Transverse colon (tissue), 4 donors: ENCODE measurements at regions of chr1 and their contacts with region 1.

Region 1: GRCh38 chr1:71657891-71658679 is 577.2 kb upstream of the ZRANB2 start:
- DNase-seq: no peak
- H3K4me3 ChIP-seq: no peak overlapping the region
- H3K27ac ChIP-seq: no peak overlapping the region
- H3K4me1 ChIP-seq: peaks cover 0 to 6% (median 2%) of the 10 kb centered on the region in 4 donors
- H3K27me3 ChIP-seq: no peaks in the 10 kb centered on the region
- CTCF ChIP-seq: no peak
- EP300 ChIP-seq: no peak
- POLR2A ChIP-seq: no peak

Region 2: GRCh38 chr1:71572038-71572437 is 86.0 kb before region 1 on chr1:
- in situ Hi-C with region 1: no loop called
- intact Hi-C with region 1: no loop called
- DNase-seq: no peak
- H3K4me3 ChIP-seq: no peak overlapping the region
- H3K27ac ChIP-seq: peak overlapping the region in 1 of 4 donors; percentile 12
- H3K4me1 ChIP-seq: peaks cover 0 to 4% (median 0%) of the 10 kb centered on the region in 4 donors
- H3K27me3 ChIP-seq: no peaks in the 10 kb centered on the region
- CTCF ChIP-seq: no peak
- EP300 ChIP-seq: no peak
- POLR2A ChIP-seq: no peak

Region 3: GRCh38 chr1:71717186-71717585 is 59.1 kb after region 1 on chr1:
- in situ Hi-C with region 1: no loop called
- intact Hi-C with region 1: loop called (anchors 10 kb)
- DNase-seq: no peak
- H3K4me3 ChIP-seq: no peak overlapping the region
- H3K27ac ChIP-seq: no peak overlapping the region
- H3K4me1 ChIP-seq: no peaks in the 10 kb centered on the region
- H3K27me3 ChIP-seq: no peaks in the 10 kb centered on the region
- CTCF ChIP-seq: no peak
- EP300 ChIP-seq: no peak
- POLR2A ChIP-seq: no peak

Region 4: GRCh38 chr1:71780681-71781080 is 122.6 kb after region 1 on chr1:
- in situ Hi-C with region 1: no loop called
- intact Hi-C with region 1: no loop called
- DNase-seq: no peak
- H3K4me3 ChIP-seq: no peak overlapping the region
- H3K27ac ChIP-seq: no peak overlapping the region
- H3K4me1 ChIP-seq: peaks cover 0 to 16% (median 2%) of the 10 kb centered on the region in 4 donors
- H3K27me3 ChIP-seq: no peaks in the 10 kb centered on the region
- CTCF ChIP-seq: no peak
- EP300 ChIP-seq: no peak
- POLR2A ChIP-seq: no peak